CD8-positive, alpha-beta memory T cell (primary cell): ENCODE measurements at regions of chr2 and their contacts with region 1.

Region 1: DNA sequence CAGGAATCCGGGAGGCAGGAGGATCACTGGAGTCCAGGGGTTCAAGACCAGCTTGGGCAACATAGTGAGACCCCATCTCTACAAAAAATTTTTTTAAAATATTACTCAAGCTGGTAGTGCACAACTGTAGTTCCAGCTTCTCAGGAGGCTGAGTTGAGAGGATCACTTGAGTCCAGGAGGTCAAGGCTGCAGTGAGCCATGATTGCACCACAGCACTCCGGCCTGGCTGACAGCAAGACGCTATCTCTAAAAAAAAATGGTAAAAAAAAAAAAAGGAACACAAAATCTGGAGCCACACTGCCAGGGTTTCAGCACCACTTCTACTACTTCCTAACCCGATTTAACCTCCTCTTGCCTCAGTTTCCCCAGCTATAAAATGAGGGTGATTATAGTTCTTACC is 57.0 kb downstream of the STEAP3 start:
- DNase-seq: no peak
- H3K4me3 ChIP-seq: no peak overlapping the region
- H3K4me3 Mint-ChIP-seq: no peak overlapping the region
- H3K27ac ChIP-seq: no peak overlapping the region
- H3K27ac Mint-ChIP-seq: no peak overlapping the region
- H3K4me1 ChIP-seq: no peaks in the 10 kb centered on the region
- H3K4me1 Mint-ChIP-seq: no peaks in the 10 kb centered on the region
- H3K27me3 ChIP-seq: no peaks in the 10 kb centered on the region
- H3K27me3 Mint-ChIP-seq: no peaks in the 10 kb centered on the region

Region 2: GRCh38 chr2:119201815-119202214 is 78.9 kb before region 1 on chr2:
- CTCF ChIA-PET with region 1: no interaction called
- POLR2A ChIA-PET with region 1: interaction called, 14 read pairs
- DNase-seq: no peak
- H3K4me3 ChIP-seq: no peak overlapping the region
- H3K4me3 Mint-ChIP-seq: no peak overlapping the region
- H3K27ac ChIP-seq: no peak overlapping the region
- H3K27ac Mint-ChIP-seq: peak overlapping the region in 1 of 8 donors; percentile 51
- H3K4me1 ChIP-seq: no peaks in the 10 kb centered on the region
- H3K4me1 Mint-ChIP-seq: no peaks in the 10 kb centered on the region
- H3K27me3 ChIP-seq: no peaks in the 10 kb centered on the region
- H3K27me3 Mint-ChIP-seq: peaks cover 8% of the 10 kb centered on the region in 2 donors